Right ventricle myocardium inferior (tissue), 1 donor: ENCODE measurements at regions of chr12 and their contacts with region 1.

Region 1: DNA sequence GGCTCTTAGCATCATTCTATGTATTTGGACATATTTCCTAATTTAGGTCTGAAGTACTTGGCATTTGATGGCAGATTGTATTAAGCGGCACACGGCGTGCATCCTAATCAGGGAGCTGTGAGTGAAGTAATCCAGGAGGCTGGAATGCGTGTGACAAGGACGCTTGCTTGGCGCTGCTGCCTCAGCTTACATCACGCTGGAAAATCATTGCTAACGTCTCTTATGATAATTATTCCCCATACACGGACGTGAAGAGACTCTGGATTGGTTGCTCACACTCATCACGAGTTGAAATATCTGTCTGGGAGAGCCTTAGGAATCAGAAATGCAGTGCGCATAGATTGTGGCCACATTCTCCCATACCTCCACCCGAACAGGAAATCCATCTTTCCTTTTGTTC is 85.3 kb downstream of the FBXW8 start:
- DNase-seq: no peak
- ATAC-seq: peak; percentile 84

Region 2: DNA sequence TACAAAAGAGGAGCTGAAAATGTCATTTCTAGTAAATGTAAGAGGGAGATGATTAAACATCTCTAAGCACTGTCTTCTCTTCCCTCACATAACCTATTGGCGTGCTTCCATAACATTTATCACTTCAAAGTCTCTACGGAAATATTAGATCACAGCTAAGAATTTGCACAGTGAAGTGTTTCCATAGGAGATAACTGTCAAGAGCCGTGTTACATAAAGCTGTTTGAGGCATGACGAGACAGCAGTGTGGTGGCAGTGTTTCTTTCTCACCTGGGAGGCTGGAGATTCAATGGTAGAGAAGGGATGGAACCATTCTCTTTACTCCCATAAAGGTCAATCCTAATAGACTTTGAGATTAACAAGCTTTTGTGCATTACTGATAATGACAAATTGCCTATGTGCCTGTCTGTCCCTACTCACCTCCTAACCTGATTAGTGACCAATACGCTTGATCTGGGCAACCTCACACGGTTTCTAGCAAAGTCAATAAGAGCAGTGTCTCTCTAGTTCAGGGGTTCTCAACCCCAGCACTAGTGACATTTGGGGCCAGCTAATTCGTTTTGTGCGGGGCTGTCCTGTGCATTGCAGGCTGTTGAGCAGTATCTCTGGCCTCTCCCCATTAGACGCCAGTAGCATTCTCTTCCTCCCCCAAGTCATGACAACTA is 50.1 kb before region 1 on chr12:
- intact Hi-C with region 1: loop called (anchors 5 kb)
- DNase-seq: no peak
- ATAC-seq: no peak